ENCODE measurements at regions of chr15 and their contacts with region 1.

Region 1: DNA sequence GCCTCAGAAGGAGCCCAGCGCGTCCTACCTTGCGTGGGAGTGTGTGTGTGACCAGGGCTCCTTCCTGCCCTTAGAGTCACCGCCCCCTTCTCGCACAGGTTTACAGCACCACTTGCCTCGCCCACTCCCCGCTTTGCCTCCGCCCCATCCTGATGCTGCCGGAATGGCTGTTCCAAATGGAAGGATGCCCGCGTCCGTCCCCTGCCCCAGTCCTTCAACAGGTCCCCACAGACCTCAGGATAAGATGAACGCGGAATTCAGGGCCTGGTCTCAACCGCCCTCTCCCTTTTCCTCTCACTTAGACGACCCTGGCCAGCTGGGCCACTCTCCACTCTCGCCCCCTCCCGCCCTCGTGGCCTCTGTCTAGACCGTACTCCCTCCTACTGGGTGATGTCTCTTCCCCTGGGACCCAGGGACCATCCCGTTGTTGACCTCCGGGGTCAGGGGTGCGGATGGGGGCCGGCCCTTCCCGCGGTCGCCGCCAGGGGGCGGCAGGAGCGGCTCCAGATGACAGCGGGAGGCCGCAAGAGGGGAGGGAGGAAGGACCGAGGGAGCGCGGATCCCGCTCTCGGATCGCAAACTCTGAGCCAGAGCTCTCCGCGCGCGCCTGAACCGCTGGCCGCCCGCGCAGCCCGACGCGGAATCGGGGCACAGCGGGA is at the start of gene THSD4:
- DNase-seq: peak; percentile 71
- H3K4me3 ChIP-seq: peak within 1 kb of the TSS; percentile 63 to 68
- H3K27ac ChIP-seq: peak within 1 kb of the TSS; percentile 89 to 93
- H3K4me1 ChIP-seq: no peaks in the 10 kb centered on the region
- H3K27me3 ChIP-seq: no peaks in the 10 kb centered on the region
- CTCF ChIP-seq: peak; percentile 96 to 99 (median 98)
- POLR2A ChIP-seq: no peak
- total RNA-seq, gene THSD4: 84.1 to 223 TPM

Region 2: DNA sequence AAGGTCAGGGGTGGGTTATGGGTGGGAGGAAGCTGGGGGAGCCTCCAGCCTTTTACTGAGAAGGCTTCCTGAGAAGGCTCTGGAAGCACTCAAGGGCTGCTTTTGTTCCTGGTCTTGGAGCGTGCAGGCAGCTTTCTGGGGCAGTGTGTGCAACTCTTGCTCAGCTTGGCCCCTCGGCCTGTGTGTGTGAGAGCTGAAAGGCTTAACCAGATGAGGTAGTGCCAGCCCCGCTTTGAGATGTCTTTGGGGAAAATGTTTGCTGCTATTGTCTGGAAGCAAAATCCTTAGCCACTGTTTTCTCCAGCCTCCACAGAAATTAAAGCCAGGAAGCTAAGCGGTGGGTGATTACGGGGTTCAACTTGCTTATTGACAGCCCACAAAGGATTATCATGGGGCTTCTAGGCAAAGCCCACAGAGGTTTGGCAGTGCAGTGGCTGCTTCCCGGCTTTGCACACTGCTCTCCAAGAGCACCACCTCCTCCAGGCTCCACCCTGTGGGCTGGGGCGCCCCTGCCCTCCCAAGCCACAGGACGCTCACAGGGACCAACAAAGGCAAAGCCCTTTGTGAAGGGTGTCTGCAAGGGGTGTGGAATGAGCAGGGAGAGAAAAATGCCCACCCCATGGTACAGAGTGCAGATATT is 895.6 kb before region 1 on chr15:
- intact Hi-C with region 1: no loop called
- DNase-seq: no peak
- H3K4me3 ChIP-seq: no peak overlapping the region
- H3K27ac ChIP-seq: no peak overlapping the region
- H3K4me1 ChIP-seq: no peaks in the 10 kb centered on the region
- H3K27me3 ChIP-seq: no peaks in the 10 kb centered on the region
- CTCF ChIP-seq: no peak
- POLR2A ChIP-seq: no peak

Region 3: DNA sequence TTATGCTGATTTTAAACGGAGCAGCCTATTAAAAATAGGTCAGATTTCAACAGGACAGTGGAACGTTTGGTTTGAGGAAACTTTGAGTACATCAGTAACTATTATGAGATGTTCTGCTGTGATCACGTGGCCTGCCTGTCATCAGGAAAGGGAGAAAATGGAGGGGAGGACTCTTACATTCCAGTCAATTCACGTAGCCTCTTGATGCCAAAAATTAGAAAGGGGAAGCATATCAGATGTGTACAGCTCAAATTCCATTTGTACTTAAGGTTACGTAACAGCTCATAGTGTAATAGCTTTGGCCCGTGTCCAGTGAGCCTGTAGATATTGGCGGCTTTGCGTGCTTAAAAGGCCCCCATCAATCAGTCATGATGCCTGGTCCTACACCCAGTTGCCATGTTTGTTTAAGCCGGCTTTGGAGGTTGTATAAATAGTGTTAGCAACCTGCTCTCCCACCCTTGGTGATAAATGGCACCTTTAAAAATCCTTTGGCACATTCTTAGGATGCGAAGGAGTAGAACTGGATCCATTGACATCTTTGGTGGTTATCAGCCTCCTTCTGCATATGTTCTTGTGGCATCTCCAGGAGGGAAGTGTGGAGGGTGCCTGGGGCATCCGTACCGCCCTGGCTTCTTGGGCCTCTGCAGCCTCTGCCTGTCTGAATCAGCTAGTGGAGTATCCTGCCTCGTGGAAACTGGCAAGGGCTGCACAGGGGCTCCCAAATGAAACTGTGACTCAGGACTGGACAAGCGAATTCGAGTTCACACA is 164.1 kb after region 1 on chr15:
- intact Hi-C with region 1: loop called (anchors 5 kb)
- DNase-seq: peak; percentile 84
- H3K4me3 ChIP-seq: no peak overlapping the region
- H3K27ac ChIP-seq: peak overlapping the region; percentile 60 to 65
- H3K4me1 ChIP-seq: no peaks in the 10 kb centered on the region
- H3K27me3 ChIP-seq: no peaks in the 10 kb centered on the region
- CTCF ChIP-seq: no peak
- POLR2A ChIP-seq: no peak

Region 4: GRCh38 chr15:71337207-71337700 is 222.2 kb after region 1 on chr15:
- intact Hi-C with region 1: loop called (anchors 5 kb)
- DNase-seq: peak; percentile 77
- H3K4me3 ChIP-seq: no peak overlapping the region
- H3K27ac ChIP-seq: peak overlapping the region; percentile 16 to 56
- H3K4me1 ChIP-seq: no peaks in the 10 kb centered on the region
- H3K27me3 ChIP-seq: no peaks in the 10 kb centered on the region
- CTCF ChIP-seq: no peak
- POLR2A ChIP-seq: no peak

Region 5: DNA sequence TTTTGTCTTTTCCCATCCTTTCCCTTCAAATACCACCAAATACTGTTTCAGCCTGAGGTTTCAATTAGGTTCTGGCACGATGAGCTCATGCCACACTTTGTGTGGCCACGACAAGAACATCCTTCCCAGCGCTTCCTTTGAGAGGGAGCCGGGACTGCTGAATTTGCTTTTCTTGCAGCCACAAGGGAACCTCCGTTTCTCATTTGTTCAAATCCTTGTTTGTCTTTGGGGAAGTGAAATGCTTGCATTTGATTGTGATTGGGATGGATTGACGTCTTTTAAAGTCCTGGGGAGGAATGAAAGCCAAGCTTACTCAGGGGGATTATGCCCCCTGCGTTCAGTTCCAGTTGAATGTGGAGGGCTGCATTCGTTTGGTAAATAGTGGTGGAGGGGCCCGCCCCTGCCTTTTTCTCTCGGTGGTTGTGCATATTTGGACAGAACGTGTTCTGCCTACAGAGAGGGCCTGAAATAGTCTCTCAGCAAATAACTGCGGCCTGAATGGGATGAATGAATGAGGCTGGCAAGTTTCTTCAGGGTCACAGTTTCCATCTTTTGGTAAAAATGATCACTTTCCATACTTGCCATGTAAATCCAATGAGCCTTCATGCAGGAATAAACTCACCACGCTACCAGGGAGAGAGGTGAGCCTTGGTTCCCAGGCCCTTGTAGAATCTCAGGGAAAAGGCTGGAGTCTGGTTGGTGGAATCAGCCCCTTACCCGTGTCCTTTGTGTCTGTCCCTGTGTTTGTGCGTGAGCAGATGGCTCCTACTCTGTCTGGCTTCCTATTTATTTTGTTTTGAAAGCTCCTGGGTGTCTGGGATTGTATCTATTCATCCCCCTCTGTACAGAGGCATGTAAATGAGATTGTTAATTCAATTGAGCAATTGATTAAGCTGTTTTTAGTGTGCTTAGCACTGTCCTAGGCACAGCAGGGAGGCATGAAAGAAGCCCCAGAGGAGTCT is 278.1 kb after region 1 on chr15:
- intact Hi-C with region 1: loop called (anchors 5 kb)
- DNase-seq: no peak
- H3K4me3 ChIP-seq: no peak overlapping the region
- H3K27ac ChIP-seq: no peak overlapping the region
- H3K4me1 ChIP-seq: peaks cover 7% of the 10 kb centered on the region
- H3K27me3 ChIP-seq: no peaks in the 10 kb centered on the region
- CTCF ChIP-seq: no peak
- POLR2A ChIP-seq: no peak

Region 6: GRCh38 chr15:71443538-71443937 is 328.5 kb after region 1 on chr15:
- intact Hi-C with region 1: loop called (anchors 5 kb)
- DNase-seq: peak; percentile 55
- H3K4me3 ChIP-seq: no peak overlapping the region
- H3K27ac ChIP-seq: peak overlapping the region in 1 of 2 donors; percentile 25
- H3K4me1 ChIP-seq: no peaks in the 10 kb centered on the region
- H3K27me3 ChIP-seq: no peaks in the 10 kb centered on the region
- CTCF ChIP-seq: peak; percentile 85 to 87 (median 85)
- POLR2A ChIP-seq: no peak

Measured in prostate gland (tissue), 2 donors.